Activated CD4-positive, alpha-beta T cell treated with anti-CD3 and anti-CD28 coated beads for 36 hours (primary cell): ENCODE measurements at regions of chr3 and their contacts with region 1.

Region 1: GRCh38 chr3:172595641-172596393 is 72.6 kb upstream of the TNFSF10 start:
- DNase-seq: peak; percentile 55
- ATAC-seq: peak; percentile 15
- H3K4me3 Mint-ChIP-seq: peak overlapping the region; percentile 66
- H3K27ac Mint-ChIP-seq: peak overlapping the region; percentile 75
- H3K4me1 Mint-ChIP-seq: peaks cover 54% of the 10 kb centered on the region
- H3K27me3 Mint-ChIP-seq: peaks cover 4% of the 10 kb centered on the region

Region 2: GRCh38 chr3:172106989-172107388 is 488.8 kb before region 1 on chr3:
- CTCF ChIA-PET with region 1: interaction called, 4 read pairs
- POLR2A ChIA-PET with region 1: interaction called, 3 read pairs
- intact Hi-C with region 1: loop called in 1 of 2 experiments (anchors 2 kb)
- DNase-seq: peak; percentile 73
- ATAC-seq: peak; percentile 57
- H3K4me3 Mint-ChIP-seq: peak overlapping the region; percentile 54
- H3K27ac Mint-ChIP-seq: peak overlapping the region; percentile 82
- H3K4me1 Mint-ChIP-seq: peaks cover 73% of the 10 kb centered on the region
- H3K27me3 Mint-ChIP-seq: no peaks in the 10 kb centered on the region

Region 3: GRCh38 chr3:172476347-172476746 is 119.5 kb before region 1 on chr3:
- CTCF ChIA-PET with region 1: interaction called, 26 read pairs
- POLR2A ChIA-PET with region 1: no interaction called
- intact Hi-C with region 1: loop called in 1 of 2 experiments (anchors 1 kb)
- DNase-seq: no peak
- ATAC-seq: no peak
- H3K4me3 Mint-ChIP-seq: peak overlapping the region; percentile 79
- H3K27ac Mint-ChIP-seq: peak overlapping the region; percentile 4
- H3K4me1 Mint-ChIP-seq: peaks cover 20% of the 10 kb centered on the region
- H3K27me3 Mint-ChIP-seq: no peaks in the 10 kb centered on the region

Region 4: DNA sequence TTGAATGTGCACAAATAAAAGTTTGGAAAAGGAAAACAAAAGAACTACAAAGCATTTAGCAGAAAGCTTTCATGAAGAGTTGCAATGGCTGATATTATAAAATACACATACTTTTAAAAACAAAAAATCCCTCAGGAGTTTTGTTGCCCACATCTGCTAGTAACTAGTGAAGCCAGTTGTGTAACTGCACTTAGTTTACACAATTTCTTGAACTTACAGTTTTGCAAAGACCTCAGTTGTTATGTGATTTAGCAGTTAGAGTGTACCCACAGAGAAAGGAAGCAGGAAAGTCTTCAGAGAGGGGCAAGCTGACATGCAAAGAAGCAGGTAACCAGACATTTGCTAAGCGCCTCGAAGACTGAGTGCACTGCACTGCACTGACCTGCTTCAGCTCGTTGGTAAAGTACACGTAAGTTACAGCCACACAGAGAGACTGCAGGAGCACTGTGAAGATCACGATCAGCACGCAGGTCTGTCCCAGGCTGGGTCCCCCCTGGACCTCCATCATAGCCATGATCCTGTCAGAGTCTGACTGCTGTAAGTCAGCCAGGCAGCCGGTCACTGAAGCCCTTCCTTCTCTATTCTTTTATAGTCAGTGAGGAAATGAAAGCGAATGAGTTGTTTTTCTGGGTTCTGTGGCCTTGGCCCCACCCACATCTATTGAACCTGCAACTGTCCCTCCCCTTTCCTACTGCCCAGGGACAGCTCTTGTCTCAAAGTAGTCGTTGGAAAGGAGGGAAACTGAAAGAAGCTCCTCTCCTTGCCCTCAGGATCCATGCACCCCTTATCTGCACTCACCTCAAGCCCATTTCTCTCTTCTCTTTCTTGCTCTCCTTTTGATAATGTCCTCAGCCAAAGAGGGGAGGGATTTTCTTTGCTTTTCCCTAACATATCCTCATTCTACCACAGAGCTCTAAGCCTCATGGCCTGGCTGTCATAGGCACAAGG is 72.7 kb before region 1 on chr3 and contains the start of gene TNFSF10:
- CTCF ChIA-PET with region 1: interaction called, 26 read pairs
- POLR2A ChIA-PET with region 1: interaction called, 4 read pairs
- intact Hi-C with region 1: loop called in 1 of 2 experiments (anchors 1 kb)
- DNase-seq: peak; percentile 81
- ATAC-seq: peak; percentile 80
- H3K4me3 Mint-ChIP-seq: peak within 1 kb of the TSS; percentile 91
- H3K27ac Mint-ChIP-seq: peak within 1 kb of the TSS; percentile 95
- H3K4me1 Mint-ChIP-seq: peaks cover 50% of the 10 kb centered on the region
- H3K27me3 Mint-ChIP-seq: no peaks in the 10 kb centered on the region
- total RNA-seq, gene TNFSF10: 33.1 to 34.8 TPM

Region 5: DNA sequence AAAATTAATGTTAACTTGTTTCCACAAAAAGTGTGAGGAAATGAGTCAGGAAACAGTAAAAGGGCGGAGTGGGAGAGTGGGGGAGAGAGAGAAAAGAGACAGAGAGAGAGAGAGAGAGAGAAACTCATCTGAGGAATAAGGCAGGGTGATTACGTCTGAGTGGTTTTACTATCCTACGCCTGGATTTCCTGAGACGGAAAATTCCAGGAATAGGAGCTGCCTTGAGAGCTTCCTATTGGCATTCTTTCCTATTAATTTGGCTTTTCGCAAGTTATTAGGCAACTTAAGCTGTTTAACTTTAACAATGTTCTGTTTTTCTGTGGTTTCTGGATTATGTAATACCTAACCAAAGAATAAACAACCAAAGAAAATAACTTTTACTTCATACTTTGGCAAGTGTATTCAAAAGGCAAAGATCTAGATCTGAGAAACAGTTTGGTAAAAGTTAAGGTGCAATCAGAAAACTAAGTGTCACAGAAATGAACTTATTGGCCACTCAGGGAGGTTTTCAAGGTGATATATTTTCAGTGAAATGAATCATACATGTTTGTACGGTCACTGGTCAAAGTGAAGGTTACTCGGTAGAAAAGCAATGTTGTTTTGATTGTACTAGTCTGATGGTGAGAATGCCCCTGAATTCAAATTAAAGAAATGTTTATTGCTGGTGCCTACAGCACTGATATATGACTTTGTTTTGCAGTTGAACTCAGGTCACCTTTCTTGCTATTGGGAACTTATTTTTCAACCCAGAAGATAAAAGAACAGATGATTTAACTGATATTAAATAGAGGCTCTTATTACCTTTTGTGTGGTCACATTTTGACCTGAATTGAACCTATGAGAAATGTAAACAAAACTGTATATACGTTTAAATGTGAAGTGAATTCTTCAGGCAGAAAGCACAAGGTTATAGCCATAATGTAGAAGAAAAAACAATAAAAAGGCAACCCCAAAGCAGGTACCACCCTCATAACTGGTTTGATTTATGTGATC is 32.6 kb before region 1 on chr3:
- CTCF ChIA-PET with region 1: interaction called, 12 read pairs
- POLR2A ChIA-PET with region 1: interaction called, 3 read pairs
- intact Hi-C with region 1: loop called (anchors 1 kb)
- DNase-seq: peak; percentile 64
- ATAC-seq: peak; percentile 67
- H3K4me3 Mint-ChIP-seq: peak overlapping the region; percentile 42
- H3K27ac Mint-ChIP-seq: peak overlapping the region; percentile 75
- H3K4me1 Mint-ChIP-seq: peaks cover 31% of the 10 kb centered on the region
- H3K27me3 Mint-ChIP-seq: no peaks in the 10 kb centered on the region

Region 6: GRCh38 chr3:172616031-172616461 is 20.2 kb after region 1 on chr3:
- CTCF ChIA-PET with region 1: interaction called, 10 read pairs
- POLR2A ChIA-PET with region 1: no interaction called
- intact Hi-C with region 1: loop called in 1 of 2 experiments (anchors 2 kb)
- DNase-seq: no peak
- ATAC-seq: peak; percentile 65
- H3K4me3 Mint-ChIP-seq: no peak overlapping the region
- H3K27ac Mint-ChIP-seq: no peak overlapping the region
- H3K4me1 Mint-ChIP-seq: peaks cover 15% of the 10 kb centered on the region
- H3K27me3 Mint-ChIP-seq: no peaks in the 10 kb centered on the region

Region 7: GRCh38 chr3:172673210-172673679 is 77.4 kb after region 1 on chr3:
- CTCF ChIA-PET with region 1: interaction called, 11 read pairs
- POLR2A ChIA-PET with region 1: no interaction called
- intact Hi-C with region 1: loop called in 1 of 2 experiments (anchors 5 kb)
- DNase-seq: peak; percentile 85
- ATAC-seq: peak; percentile 94
- H3K4me3 Mint-ChIP-seq: no peak overlapping the region
- H3K27ac Mint-ChIP-seq: no peak overlapping the region
- H3K4me1 Mint-ChIP-seq: no peaks in the 10 kb centered on the region
- H3K27me3 Mint-ChIP-seq: no peaks in the 10 kb centered on the region